ENCODE measurements at regions of chr18 and their contacts with region 1.

Region 1: GRCh38 chr18:28158083-28158581 is 18.8 kb downstream of the CDH2 start:
- DNase-seq: peak in 1 of 10 donors; percentile 28

Region 2: GRCh38 chr18:28013066-28013465 is 145.1 kb before region 1 on chr18:
- intact Hi-C with region 1: loop called (anchors 5 kb)
- DNase-seq: no peak